ENCODE measurements at regions of chr7 and their contacts with region 1.

Region 1: DNA sequence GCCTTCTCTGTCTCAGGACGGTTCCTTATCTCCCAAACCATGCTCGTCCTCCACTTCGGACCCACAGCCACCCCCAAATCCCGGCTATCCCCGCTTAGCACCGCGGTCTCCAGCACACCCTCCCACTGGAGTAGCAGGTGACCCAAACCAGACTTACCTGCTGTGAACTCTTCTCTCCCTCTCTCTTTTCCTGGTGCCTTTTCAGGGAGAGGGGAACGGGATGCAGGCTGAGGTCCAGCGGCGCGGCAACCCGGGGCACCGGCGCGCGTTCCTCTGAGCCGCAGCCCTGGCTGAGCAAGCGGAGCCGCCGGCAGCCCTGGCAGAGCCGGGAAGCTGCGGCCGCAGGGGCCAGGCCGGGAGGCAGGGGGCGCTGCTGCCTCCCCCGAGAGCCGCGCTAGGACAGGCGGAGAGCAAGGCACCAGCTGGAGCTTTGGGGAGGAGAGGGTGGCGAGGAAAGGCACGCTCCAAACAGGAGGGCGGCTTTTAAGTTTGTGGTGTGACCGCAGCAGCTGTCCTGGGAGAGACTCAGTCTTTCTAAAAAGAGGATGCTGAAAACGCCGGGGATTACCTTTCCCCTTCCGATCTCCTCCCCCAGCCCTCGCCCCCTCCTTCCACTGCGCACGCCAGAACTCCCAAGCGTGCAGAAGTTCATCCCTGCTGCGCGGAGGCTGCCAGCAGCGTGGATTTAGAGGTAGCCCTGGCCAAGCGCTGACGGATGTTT is at the start of gene SEMA3D:
- DNase-seq: no peak
- H3K4me3 Mint-ChIP-seq: peak within 1 kb of the TSS; percentile 26
- H3K27ac Mint-ChIP-seq: no peak within 1 kb of the TSS
- H3K4me1 Mint-ChIP-seq: peaks cover 7% of the 10 kb centered on the region
- H3K27me3 Mint-ChIP-seq: peaks cover 38% of the 10 kb centered on the region
- total RNA-seq, gene SEMA3D: 0.09 and 0.11 TPM in 2 replicates

Region 2: GRCh38 chr7:85215098-85215497 is 28.4 kb after region 1 on chr7:
- intact Hi-C with region 1: no loop called
- DNase-seq: no peak
- H3K4me3 Mint-ChIP-seq: no peak overlapping the region
- H3K27ac Mint-ChIP-seq: no peak overlapping the region
- H3K4me1 Mint-ChIP-seq: no peaks in the 10 kb centered on the region
- H3K27me3 Mint-ChIP-seq: no peaks in the 10 kb centered on the region

Region 3: DNA sequence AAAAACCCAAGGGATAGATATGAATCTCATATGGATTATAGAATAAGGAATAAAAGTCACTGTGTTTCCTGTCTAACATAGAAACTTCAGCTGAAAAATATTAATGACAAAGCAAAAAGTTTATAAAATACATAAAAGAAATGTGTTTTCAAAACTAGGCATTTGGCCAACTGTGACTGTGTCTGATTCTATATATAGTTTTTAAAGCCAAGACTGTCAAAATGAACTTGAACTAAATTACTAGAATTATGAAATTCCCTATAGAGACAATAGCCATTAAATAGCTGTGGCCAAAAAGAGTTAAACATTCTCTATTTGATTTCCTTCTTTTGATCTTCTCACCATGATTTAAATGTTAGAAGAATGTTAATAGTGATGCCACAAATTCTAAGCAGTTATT is 311.4 kb after region 1 on chr7:
- intact Hi-C with region 1: no loop called
- DNase-seq: no peak
- H3K4me3 Mint-ChIP-seq: no peak overlapping the region
- H3K27ac Mint-ChIP-seq: no peak overlapping the region
- H3K4me1 Mint-ChIP-seq: no peaks in the 10 kb centered on the region
- H3K27me3 Mint-ChIP-seq: no peaks in the 10 kb centered on the region

Region 4: DNA sequence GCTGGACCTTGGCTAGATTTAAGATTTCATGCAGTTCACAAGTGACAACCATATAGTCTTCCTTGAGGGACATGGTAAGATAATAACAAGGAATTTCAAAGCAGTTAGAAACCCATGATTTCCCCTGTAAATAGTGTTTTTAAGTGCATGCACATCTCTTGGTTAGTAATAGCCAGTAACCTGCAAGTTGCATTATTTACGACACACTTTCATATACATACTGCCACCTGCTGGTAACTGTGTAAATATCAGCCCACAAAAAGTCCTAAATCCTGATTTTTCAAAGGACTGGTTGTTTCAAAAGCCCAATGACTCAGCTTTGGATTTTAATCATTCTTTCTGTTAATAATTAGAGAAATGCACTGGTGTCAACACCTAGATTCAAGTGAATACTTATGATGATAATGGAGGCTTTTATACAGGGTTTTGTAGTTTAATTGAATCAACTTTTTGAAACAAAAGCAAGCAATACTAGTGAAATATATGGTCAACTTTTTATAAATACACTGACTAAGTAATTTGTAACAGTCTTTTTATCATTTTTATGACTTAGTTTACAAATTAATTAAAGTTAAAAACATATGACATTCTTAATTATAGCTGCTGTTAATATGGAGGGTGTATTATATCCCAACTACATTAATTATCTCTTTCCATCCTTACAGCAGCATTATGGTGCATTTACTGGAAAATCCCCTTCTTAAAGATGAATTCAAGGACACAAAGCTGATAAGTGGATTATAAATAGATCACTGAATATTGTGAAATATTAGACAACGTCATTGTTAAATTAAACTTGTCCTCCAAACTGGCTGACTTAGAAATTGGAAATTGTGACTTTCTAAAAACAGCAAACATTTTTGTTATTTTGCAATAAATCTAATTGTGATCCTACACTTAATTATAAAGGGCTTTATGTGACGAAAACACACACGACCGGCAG is 367.8 kb after region 1 on chr7:
- intact Hi-C with region 1: loop called (anchors 2 kb)
- DNase-seq: no peak
- H3K4me3 Mint-ChIP-seq: no peak overlapping the region
- H3K27ac Mint-ChIP-seq: no peak overlapping the region
- H3K4me1 Mint-ChIP-seq: no peaks in the 10 kb centered on the region
- H3K27me3 Mint-ChIP-seq: no peaks in the 10 kb centered on the region